Naive thymus-derived CD4-positive, alpha-beta T cell (primary cell): ENCODE measurements at regions of chr4 and their contacts with region 1.

Region 1: DNA sequence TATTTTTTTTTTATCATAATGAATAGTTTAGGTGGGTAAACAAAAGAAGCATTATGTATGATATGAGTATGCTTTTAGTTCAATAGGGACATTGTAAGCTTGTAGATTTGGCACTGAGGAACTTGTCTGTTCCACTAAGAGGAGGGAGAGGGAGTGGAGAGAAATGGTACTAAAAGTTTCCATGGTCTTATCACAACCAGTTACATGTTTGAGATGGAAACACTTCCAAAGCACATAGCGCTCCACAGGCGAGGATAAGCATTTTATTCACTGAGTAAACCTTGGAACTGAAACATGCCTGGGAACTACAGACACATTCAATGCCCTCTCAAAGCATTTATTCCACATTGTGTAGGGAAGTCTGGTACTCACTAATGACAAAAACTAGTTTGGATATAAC is 15.5 kb downstream of the MYOZ2 start:
- DNase-seq: no peak
- ATAC-seq: no peak
- H3K4me3 ChIP-seq: no peak overlapping the region
- H3K4me3 Mint-ChIP-seq: no peak overlapping the region
- H3K27ac ChIP-seq: no peak overlapping the region
- H3K27ac Mint-ChIP-seq: no peak overlapping the region
- H3K4me1 ChIP-seq: no peaks in the 10 kb centered on the region
- H3K4me1 Mint-ChIP-seq: peaks cover 0 to 1% (median 0%) of the 10 kb centered on the region in 7 donors
- H3K27me3 ChIP-seq: no peaks in the 10 kb centered on the region
- H3K27me3 Mint-ChIP-seq: peaks cover 0 to 10% (median 0%) of the 10 kb centered on the region in 5 donors

Region 2: DNA sequence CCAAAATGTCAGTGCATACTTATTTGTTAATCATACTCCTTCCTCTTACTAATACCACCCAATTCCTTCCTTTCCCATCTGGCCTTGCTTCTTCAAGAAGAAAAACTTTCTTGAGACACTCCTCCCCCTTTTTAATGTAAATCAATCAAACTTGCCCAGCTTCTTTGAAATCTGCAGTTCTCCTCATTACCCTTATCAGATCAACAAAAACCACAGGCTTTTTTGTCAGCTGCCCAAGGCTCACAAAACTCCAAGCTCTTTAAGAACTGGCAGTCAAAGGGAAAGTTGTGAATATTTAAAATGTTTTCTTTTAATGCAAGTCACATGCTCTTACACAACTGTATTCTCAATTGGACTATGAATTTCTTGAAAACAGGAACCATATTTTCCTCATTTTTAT is 26.8 kb before region 1 on chr4:
- CTCF ChIA-PET with region 1: no interaction called
- POLR2A ChIA-PET with region 1: no interaction called
- intact Hi-C with region 1: loop called in 1 of 2 experiments (anchors 5 kb)
- DNase-seq: no peak
- ATAC-seq: peak; percentile 26
- H3K4me3 ChIP-seq: no peak overlapping the region
- H3K4me3 Mint-ChIP-seq: no peak overlapping the region
- H3K27ac ChIP-seq: no peak overlapping the region
- H3K27ac Mint-ChIP-seq: peak overlapping the region in 2 of 9 donors; percentile 26 to 34
- H3K4me1 ChIP-seq: no peaks in the 10 kb centered on the region
- H3K4me1 Mint-ChIP-seq: peaks cover 0 to 16% (median 7%) of the 10 kb centered on the region in 7 donors
- H3K27me3 ChIP-seq: no peaks in the 10 kb centered on the region
- H3K27me3 Mint-ChIP-seq: no peaks in the 10 kb centered on the region

Region 3: GRCh38 chr4:119138046-119138445 is 13.1 kb before region 1 on chr4:
- CTCF ChIA-PET with region 1: interaction called, 5 read pairs
- POLR2A ChIA-PET with region 1: no interaction called
- intact Hi-C with region 1: loop called in 1 of 2 experiments (anchors 2 kb)
- DNase-seq: peak in 1 of 9 donors; percentile 7
- ATAC-seq: no peak
- H3K4me3 ChIP-seq: no peak overlapping the region
- H3K4me3 Mint-ChIP-seq: peak overlapping the region in 5 of 10 donors; percentile 21 to 73 (median 62)
- H3K27ac ChIP-seq: no peak overlapping the region
- H3K27ac Mint-ChIP-seq: peak overlapping the region in 4 of 9 donors; percentile 22 to 93 (median 64)
- H3K4me1 ChIP-seq: peaks cover 25 to 27% of the 10 kb centered on the region in 2 donors
- H3K4me1 Mint-ChIP-seq: peaks cover 11 to 60% (median 35%) of the 10 kb centered on the region in 7 donors
- H3K27me3 ChIP-seq: no peaks in the 10 kb centered on the region
- H3K27me3 Mint-ChIP-seq: peaks cover 0 to 1% (median 0%) of the 10 kb centered on the region in 5 donors

Region 4: DNA sequence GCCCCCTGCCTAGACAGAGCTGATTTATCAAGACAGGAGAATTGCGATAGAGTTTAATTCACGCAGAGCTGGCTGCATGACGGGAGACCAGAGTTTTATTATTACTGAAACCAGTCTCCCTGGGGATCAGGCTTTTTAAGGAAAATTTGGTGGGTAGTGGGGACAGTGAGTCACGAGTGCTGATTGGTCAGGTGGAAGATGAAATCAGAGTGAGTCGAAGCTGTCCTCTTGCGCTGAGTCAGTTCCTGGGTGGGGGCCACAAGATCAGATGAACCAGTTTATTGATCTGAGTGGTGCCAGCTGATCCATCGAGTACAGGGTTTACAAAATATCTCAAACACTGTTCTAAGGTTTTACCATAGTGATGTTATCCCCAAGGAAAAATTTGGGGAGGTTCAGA is 21.1 kb after region 1 on chr4:
- CTCF ChIA-PET with region 1: no interaction called
- POLR2A ChIA-PET with region 1: no interaction called
- intact Hi-C with region 1: no loop called
- DNase-seq: no peak
- ATAC-seq: no peak
- H3K4me3 ChIP-seq: no peak overlapping the region
- H3K4me3 Mint-ChIP-seq: no peak overlapping the region
- H3K27ac ChIP-seq: no peak overlapping the region
- H3K27ac Mint-ChIP-seq: no peak overlapping the region
- H3K4me1 ChIP-seq: no peaks in the 10 kb centered on the region
- H3K4me1 Mint-ChIP-seq: peaks cover 0 to 3% (median 0%) of the 10 kb centered on the region in 7 donors
- H3K27me3 ChIP-seq: no peaks in the 10 kb centered on the region
- H3K27me3 Mint-ChIP-seq: peaks cover 0 to 9% (median 0%) of the 10 kb centered on the region in 5 donors

Region 5: GRCh38 chr4:119314356-119314755 is 163.2 kb after region 1 on chr4:
- CTCF ChIA-PET with region 1: no interaction called
- POLR2A ChIA-PET with region 1: no interaction called
- intact Hi-C with region 1: no loop called
- DNase-seq: peak in 7 of 9 donors; percentile 37 to 72 (median 61)
- ATAC-seq: peak; percentile 80
- H3K4me3 ChIP-seq: no peak overlapping the region
- H3K4me3 Mint-ChIP-seq: no peak overlapping the region
- H3K27ac ChIP-seq: no peak overlapping the region
- H3K27ac Mint-ChIP-seq: peak overlapping the region in 2 of 9 donors; percentile 1 to 17
- H3K4me1 ChIP-seq: no peaks in the 10 kb centered on the region
- H3K4me1 Mint-ChIP-seq: peaks cover 0 to 2% (median 0%) of the 10 kb centered on the region in 7 donors
- H3K27me3 ChIP-seq: no peaks in the 10 kb centered on the region
- H3K27me3 Mint-ChIP-seq: peaks cover 0 to 40% (median 8%) of the 10 kb centered on the region in 5 donors